Natural killer cell (primary cell): ENCODE measurements at regions of chr1 and their contacts with region 1.

Region 1: GRCh38 chr1:151459331-151460046 is at the start of gene POGZ:
- DNase-seq: peak; percentile 92 to 94
- ATAC-seq: peak; percentile 79 to 87 (median 79)
- H3K4me3 ChIP-seq: peak within 1 kb of the TSS; percentile 83
- H3K4me3 Mint-ChIP-seq: peak within 1 kb of the TSS; percentile 90
- H3K27ac ChIP-seq: peak within 1 kb of the TSS; percentile 92
- H3K27ac Mint-ChIP-seq: peak within 1 kb of the TSS; percentile 87 to 94
- H3K4me1 ChIP-seq: peaks cover 17% of the 10 kb centered on the region
- H3K4me1 Mint-ChIP-seq: peaks cover 17 to 18% of the 10 kb centered on the region in 2 donors
- H3K27me3 ChIP-seq: peaks cover 3% of the 10 kb centered on the region
- H3K27me3 Mint-ChIP-seq: peaks cover 16 to 21% of the 10 kb centered on the region in 2 donors
- CTCF ChIP-seq: no peak
- total RNA-seq, gene POGZ: 106 to 129 (median 121) TPM

Region 2: GRCh38 chr1:151399890-151400495 is 59.5 kb before region 1 on chr1:
- intact Hi-C with region 1: loop called (anchors 1 kb)
- DNase-seq: peak in 1 of 2 donors; percentile 44
- ATAC-seq: peak; percentile 16 to 29 (median 21)
- H3K4me3 ChIP-seq: peak overlapping the region; percentile 90
- H3K4me3 Mint-ChIP-seq: peak overlapping the region; percentile 99
- H3K27ac ChIP-seq: peak overlapping the region; percentile 96
- H3K27ac Mint-ChIP-seq: peak overlapping the region; percentile 99 to 100
- H3K4me1 ChIP-seq: peaks cover 17% of the 10 kb centered on the region
- H3K4me1 Mint-ChIP-seq: peaks cover 20 to 21% of the 10 kb centered on the region in 2 donors
- H3K27me3 ChIP-seq: no peaks in the 10 kb centered on the region
- H3K27me3 Mint-ChIP-seq: no peaks in the 10 kb centered on the region
- CTCF ChIP-seq: no peak

Region 3: DNA sequence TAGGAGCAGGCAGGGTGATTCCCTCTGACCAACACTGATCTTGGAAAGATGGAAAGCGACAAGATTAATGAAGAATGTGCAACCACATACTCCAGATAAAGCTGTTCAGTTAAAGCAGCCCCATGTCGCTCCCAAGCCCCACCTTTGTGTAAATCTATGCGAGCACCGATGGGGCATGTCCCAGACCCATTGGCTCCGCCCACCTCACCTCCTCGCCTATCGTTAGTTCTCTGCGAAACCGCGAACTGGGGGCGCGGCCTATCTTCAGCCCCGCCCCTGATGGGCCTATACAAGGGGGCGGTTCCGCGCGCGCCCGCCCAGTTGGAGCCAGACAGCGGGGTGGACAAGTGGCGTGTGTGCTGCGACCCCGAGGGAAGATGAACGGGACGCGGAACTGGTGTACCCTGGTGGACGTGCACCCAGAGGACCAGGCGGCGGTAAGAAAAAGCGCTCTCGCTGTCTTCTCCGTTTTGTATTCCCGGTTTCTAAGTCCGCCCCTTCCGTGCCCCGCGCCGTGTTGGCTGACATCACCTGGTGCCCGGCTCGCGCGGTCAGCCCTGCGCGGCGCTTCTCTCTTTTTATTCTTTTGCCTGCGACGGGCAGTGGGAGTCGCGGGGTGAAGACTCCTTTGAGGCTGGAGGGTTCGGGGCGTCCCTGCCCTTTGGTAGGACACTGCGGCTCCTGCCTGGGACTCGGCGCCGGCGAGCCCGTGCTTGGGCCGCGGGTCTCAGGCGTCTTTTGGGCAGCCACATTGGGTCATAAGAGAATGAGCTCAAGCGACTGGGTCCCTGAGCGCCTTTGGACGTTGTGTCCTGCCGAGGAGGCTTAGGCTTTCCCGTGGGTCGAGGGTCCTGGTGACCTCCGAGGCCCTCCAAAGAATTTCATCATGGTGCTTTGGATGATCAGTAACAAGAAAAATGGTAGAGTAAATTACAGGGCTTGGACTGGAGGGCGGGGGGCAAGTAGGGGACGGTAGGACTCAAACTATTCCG is 80.8 kb after region 1 on chr1 and contains the start of gene TUFT1:
- intact Hi-C with region 1: loop called (anchors 5 kb)
- DNase-seq: peak; percentile 92 to 97
- ATAC-seq: peak; percentile 98 to 99 (median 99)
- H3K4me3 ChIP-seq: peak within 1 kb of the TSS; percentile 73
- H3K4me3 Mint-ChIP-seq: peak within 1 kb of the TSS; percentile 99
- H3K27ac ChIP-seq: peak within 1 kb of the TSS; percentile 32
- H3K27ac Mint-ChIP-seq: peak within 1 kb of the TSS; percentile 88 to 91
- H3K4me1 ChIP-seq: peaks cover 21% of the 10 kb centered on the region
- H3K4me1 Mint-ChIP-seq: peaks cover 19 to 24% of the 10 kb centered on the region in 2 donors
- H3K27me3 ChIP-seq: peaks cover 4% of the 10 kb centered on the region
- H3K27me3 Mint-ChIP-seq: peaks cover 25% of the 10 kb centered on the region in 2 donors
- CTCF ChIP-seq: no peak
- total RNA-seq, gene TUFT1: 4.6 to 7.2 (median 5.0) TPM